Ascending aorta (tissue), 2 donors: ENCODE measurements at regions of chr17 and their contacts with region 1.

Region 1: DNA sequence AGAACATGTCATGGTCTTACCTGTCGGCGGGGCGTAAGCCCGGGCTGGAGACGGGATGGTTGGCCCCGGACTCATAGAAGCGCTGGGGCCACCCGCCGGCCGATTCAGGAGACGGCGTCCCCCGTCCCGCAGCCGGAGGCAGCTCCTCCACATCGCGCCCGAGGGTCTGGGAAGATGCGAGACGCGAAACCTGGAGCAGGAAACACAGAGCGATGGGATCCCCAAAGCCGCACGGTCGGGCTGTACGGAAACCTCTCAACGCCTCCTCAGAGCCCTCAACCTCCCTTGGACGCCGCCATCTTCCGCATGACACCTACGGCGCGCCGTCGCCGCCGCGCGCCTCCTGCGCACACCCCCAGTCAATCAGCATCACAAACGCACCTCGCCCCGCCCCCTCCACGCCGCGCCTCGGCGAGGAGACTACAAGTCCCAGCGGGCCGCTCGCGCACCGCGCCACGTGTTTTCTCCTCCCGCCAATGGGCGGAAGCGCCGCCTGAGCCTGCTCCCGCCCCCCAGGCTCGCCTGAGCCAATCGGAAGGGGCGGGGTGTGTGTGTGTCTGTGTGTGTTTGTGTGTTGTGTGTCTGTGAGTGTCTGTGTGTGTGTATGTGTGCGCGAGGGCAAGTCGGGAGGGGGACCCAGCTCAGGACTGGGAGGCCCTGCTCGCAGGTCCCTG is at the starts of genes ATPAF2 and GID4:
- DNase-seq: peak; percentile 98 to 100
- H3K4me3 ChIP-seq: peak within 1 kb of the TSS; percentile 93 to 98
- H3K27ac ChIP-seq: peak within 1 kb of the TSS; percentile 62 to 76
- H3K4me1 ChIP-seq: peaks cover 3 to 18% of the 10 kb centered on the region in 2 donors
- H3K27me3 ChIP-seq: no peaks in the 10 kb centered on the region
- CTCF ChIP-seq: no peak
- total RNA-seq, gene ATPAF2: 2.6 TPM
- total RNA-seq, gene GID4: 8.3 TPM

Region 2: GRCh38 chr17:17496189-17497064 is 542.6 kb before region 1 on chr17 and contains the start of gene RASD1:
- intact Hi-C with region 1: loop called (anchors 10 kb)
- DNase-seq: peak; percentile 54 to 94
- H3K4me3 ChIP-seq: peak within 1 kb of the TSS; percentile 69 to 70
- H3K27ac ChIP-seq: peak within 1 kb of the TSS; percentile 65 to 78
- H3K4me1 ChIP-seq: peaks cover 6 to 9% of the 10 kb centered on the region in 2 donors
- H3K27me3 ChIP-seq: no peaks in the 10 kb centered on the region
- CTCF ChIP-seq: peak; percentile 78 to 94 (median 88)
- total RNA-seq, gene RASD1: 293 TPM

Region 3: DNA sequence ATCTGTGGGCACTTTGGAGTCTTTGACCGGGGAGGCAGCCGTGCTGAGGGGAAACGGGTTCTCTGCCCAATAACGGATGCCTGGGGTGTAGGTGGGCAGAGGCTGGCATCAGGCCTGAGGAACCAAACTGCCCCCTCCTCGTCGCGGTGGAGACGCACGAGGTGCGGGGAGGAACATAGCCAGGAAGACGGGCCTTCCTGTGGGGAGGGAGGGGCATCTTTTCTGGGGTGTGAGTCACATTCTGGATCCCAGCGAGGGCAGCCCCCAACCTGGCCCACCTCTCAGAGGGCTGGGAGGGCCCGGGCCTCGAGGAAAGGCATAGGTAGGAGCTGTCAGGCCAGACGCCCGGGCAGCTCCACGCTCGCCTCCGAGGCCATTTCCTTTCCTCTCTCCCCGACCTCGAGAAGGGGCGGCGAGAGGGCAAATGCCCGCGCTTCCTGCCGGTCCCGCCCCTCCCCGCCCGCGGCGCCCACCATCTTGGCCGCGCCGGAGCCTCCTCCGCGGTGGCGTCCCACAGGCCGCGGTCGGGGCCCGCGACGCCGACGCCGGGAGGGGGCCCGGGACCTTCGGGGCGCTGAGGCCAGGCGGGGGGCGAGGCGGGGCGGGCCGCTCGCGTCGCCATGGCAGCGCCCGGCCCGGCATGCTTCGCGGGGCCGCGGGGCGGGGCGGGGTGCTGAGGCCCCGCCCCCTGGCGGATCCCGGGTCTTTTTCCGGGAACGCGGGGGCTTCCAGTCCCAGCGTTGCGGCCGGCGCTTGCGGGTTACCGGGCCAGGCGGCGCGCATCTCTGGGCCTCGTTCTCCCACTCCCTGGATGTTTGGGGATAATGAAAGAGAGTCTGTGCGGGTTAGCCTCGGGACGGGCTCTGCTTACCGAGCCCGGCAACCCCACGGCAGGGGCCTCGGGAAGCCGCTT is 344.6 kb before region 1 on chr17:
- intact Hi-C with region 1: loop called (anchors 5 kb)
- DNase-seq: peak; percentile 48 to 88
- H3K4me3 ChIP-seq: peak overlapping the region; percentile 71 to 78
- H3K27ac ChIP-seq: peak overlapping the region; percentile 98 to 99
- H3K4me1 ChIP-seq: peaks cover 6 to 51% of the 10 kb centered on the region in 2 donors
- H3K27me3 ChIP-seq: no peaks in the 10 kb centered on the region
- CTCF ChIP-seq: no peak

Region 4: DNA sequence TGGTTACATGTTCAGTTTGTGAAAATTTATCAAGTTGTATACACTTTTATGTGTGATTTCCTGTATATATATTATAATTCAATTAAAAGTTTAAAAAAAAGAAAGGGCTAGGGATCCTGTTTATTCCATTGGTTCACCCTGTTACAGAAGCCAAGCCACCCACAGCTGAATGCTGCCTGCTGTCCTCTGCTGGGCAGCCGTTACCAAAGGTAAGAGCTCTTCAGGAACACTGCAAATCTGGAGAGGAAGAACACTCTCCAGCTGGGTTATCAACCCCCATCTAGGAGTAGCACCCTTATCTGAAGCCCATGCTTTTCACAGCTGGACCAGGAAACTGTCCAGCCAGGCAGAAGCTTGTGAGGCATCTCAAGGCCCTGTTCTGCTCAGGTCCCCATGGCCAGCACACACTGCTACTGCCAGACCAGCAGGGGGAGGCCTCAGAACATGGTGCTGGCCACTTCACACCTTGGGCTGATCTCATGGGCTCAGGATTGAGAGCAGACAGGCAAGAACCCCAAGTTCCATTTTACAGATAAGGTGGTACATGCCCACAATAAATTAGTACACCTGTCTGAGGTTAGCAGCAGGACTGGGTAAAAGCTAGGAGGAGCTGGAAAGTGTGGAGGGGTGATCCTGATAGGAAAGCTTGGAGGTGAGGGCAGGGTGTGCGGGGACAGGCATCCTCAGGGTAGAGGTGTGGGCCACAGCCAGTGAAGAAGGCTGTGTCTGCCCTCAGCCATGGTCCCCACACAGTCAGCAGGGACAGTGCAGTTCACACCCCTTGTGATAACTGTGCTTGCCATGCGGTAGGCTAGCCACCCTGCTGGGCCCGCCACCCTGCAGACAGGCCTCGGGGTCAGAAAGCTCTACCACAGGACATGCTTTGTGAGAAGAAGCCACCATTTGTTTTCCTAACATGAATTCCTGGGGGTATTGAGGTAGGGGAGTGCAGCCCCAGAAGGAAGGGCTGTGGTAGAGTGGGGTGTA is 147.9 kb before region 1 on chr17:
- intact Hi-C with region 1: loop called (anchors 5 kb)
- DNase-seq: no peak
- H3K4me3 ChIP-seq: no peak overlapping the region
- H3K27ac ChIP-seq: no peak overlapping the region
- H3K4me1 ChIP-seq: no peaks in the 10 kb centered on the region
- H3K27me3 ChIP-seq: no peaks in the 10 kb centered on the region
- CTCF ChIP-seq: peak; percentile 21 to 44 (median 27)

Region 5: GRCh38 chr17:18064053-18064452 is 25.1 kb after region 1 on chr17:
- intact Hi-C with region 1: no loop called
- DNase-seq: no peak
- H3K4me3 ChIP-seq: no peak overlapping the region
- H3K27ac ChIP-seq: no peak overlapping the region
- H3K4me1 ChIP-seq: no peaks in the 10 kb centered on the region
- H3K27me3 ChIP-seq: no peaks in the 10 kb centered on the region
- CTCF ChIP-seq: no peak

Region 6: DNA sequence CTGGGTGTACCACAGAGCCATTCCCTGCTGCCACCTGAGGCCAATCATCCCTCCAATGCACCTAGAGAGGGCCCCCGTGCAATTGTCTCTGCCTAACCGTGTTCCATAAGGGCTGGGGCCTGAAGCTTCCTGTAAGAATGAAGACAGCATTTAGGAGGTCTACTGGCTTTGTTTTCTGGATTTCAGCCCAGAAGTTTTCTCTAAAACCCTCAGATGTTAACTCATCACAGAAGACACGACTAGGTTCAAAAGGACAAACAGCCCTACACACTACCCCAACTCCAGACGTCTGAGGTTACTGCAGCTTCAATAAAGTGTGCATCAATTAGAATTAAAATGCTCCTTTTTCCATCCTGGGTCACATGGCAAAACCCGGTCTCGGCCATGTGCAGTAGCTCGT is 37.9 kb after region 1 on chr17:
- intact Hi-C with region 1: no loop called
- DNase-seq: no peak
- H3K4me3 ChIP-seq: no peak overlapping the region
- H3K27ac ChIP-seq: no peak overlapping the region
- H3K4me1 ChIP-seq: no peaks in the 10 kb centered on the region
- H3K27me3 ChIP-seq: no peaks in the 10 kb centered on the region
- CTCF ChIP-seq: no peak

Region 7: DNA sequence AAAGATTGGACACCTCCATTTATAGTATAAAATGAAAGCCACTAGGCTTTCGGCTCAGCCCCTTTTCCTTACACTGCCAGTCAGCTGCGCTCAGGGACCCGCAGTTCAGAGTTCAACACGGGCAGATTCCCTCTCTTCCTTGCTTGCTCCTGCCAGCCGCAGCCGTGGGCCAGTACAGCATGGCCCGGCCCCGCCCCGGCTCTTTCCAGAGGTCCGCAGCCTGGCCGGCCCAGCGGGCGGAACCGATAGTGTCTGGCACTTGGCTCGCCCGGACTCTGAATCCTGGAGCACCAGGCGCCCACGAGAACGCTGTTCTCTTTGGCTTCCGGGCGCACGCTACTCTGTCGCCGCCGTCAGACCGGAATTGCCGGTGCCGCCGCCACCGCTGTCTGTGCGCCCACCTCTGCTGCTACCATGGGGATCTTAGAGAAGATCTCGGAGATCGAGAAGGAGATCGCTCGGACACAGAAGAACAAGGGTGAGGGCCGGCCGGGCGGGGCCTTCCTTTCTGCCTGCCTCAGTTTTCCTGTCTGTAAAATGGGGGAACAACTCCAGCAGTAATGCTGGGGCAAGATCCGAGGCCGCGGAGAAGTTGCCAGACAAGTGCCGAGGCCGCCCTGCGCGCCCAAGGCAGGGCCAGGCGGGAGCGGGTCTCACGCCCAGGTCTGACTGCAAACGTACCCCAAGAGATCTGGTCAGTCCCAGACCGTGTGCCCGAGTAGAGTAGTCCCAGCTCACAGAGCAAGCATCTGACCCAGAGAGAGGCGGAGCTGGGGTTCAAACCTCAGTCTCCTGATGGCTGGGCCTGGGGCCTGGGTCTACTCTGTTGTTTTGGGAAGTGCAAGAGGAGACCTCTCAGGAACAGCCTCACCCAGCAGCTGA is 48.9 kb after region 1 on chr17 and contains the start of gene DRG2:
- intact Hi-C with region 1: loop called (anchors 1 kb)
- DNase-seq: peak; percentile 40 to 95
- H3K4me3 ChIP-seq: peak within 1 kb of the TSS; percentile 90 to 95
- H3K27ac ChIP-seq: peak within 1 kb of the TSS; percentile 83 to 85
- H3K4me1 ChIP-seq: peaks cover 5 to 13% of the 10 kb centered on the region in 2 donors
- H3K27me3 ChIP-seq: no peaks in the 10 kb centered on the region
- CTCF ChIP-seq: peak in 1 of 3 experiments; percentile 16
- total RNA-seq, gene DRG2: 118 TPM

Region 8: DNA sequence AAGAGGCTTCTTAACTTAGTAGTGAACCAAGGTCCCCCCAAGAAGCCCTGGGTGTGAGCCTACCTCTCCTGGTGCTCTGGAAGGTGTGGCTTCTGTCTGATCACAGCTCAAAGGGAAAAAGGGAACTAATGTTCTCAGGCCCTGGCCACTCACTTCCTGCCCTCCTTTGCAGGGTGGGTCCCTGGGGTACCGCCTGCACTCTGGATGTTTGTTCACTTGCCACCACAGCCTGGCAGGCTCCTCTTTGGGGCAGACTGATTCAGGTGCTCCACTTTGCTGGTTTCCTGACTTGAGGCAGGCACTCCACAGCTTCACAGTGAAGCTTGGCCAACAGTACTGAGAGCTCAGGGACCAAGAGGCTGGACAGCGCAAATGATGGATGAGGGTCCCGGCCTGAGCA is 63.6 kb after region 1 on chr17:
- intact Hi-C with region 1: no loop called
- DNase-seq: no peak
- H3K4me3 ChIP-seq: no peak overlapping the region
- H3K27ac ChIP-seq: no peak overlapping the region
- H3K4me1 ChIP-seq: no peaks in the 10 kb centered on the region
- H3K27me3 ChIP-seq: no peaks in the 10 kb centered on the region
- CTCF ChIP-seq: no peak